ENCODE measurements at regions of chr3 and their contacts with region 1.

Region 1: DNA sequence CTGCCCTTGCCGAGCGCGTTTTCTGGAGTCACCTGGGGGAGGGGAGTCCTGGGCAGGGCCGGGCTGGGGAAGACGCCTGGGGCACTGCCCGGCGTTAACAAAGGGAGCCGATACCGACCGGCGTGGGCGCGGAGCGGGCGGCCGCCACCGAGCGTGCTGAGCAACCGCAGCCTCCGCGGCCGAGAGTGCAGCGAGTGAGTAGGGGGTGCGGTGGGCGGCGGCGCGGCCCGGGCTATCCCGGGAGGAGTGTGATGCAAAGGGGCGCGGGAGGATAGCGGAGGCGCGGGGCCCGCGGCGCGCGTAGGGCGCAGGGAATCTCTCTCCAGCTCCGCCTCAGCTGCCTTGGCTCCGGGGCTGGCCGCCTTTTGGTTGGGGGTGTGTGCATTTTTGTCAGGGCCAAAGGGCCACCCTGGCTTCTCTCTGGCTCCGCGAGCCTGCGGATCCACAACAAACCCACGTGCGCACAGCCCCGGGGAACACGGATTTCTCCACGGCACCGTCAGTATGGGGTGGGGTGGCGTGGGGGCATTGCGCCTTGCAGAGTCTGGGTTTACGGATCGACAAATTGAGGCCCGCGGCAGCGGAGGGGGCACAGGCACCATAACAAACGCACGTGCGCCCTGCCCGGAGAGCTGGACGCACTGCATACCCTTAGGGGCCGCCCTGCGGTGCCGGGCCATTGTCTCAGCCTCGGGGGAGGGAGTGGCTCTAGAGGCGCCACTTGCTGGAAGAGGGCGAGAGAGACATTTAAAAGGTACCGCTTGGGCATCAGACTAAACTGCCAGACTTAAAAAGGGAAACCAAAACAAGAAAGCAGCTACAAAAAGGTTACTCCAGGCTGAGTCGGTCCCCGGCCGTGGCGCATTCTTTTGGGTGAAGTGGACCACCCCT is 560 bp downstream of the ST6GAL1 start:
- DNase-seq: peak; percentile 54
- H3K4me3 Mint-ChIP-seq: peak overlapping the region; percentile 87
- H3K27ac Mint-ChIP-seq: peak overlapping the region; percentile 90
- H3K4me1 Mint-ChIP-seq: peaks cover 49% of the 10 kb centered on the region
- H3K27me3 Mint-ChIP-seq: no peaks in the 10 kb centered on the region

Region 2: DNA sequence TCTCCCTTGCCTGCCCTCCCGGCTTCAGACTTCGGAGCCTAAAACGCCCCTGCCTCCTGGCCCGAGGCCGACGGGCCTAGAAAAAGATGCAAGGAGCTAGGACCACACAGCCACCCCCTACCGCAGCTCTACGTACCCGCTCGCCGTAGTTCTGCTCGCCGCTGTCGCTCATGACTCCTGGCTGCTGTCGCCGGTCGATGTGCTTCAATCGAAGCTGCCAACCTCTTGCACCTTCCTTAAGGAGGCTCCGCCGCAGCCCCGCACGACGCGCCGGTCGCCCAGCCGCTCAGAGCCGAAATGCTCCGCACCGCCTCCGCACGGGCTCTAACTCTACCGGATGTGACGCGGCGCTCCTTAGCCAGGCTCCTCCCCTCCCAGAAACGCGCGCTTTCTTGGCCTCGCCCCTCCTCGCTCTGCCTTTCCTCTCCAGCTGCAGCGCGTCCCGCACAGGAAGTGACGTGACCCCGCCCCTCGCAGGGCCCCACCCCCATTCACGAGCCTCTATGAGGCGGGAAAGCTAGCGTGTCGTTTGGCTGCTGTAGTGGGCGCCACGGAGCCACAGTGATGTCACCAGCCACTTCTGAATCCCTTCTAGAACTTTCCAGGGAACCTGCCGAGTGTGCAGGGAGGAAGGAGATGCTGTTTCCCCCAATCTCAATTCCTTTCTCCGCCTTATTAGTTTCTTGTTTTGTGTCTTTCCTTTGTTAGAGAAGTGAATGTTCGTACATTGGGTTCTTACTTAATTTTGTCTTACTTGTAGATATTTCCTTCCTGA is 993.0 kb before region 1 on chr3 and contains the start of gene TRA2B:
- intact Hi-C with region 1: loop called (anchors 5 kb)
- DNase-seq: peak; percentile 98
- H3K4me3 Mint-ChIP-seq: peak within 1 kb of the TSS; percentile 97
- H3K27ac Mint-ChIP-seq: peak within 1 kb of the TSS; percentile 99
- H3K4me1 Mint-ChIP-seq: peaks cover 40% of the 10 kb centered on the region
- H3K27me3 Mint-ChIP-seq: peaks cover 8% of the 10 kb centered on the region
- total RNA-seq, gene TRA2B: 279 and 312 TPM in 2 replicates

Region 3: GRCh38 chr3:186162221-186162620 is 768.7 kb before region 1 on chr3:
- intact Hi-C with region 1: no loop called
- DNase-seq: no peak
- H3K4me3 Mint-ChIP-seq: no peak overlapping the region
- H3K27ac Mint-ChIP-seq: no peak overlapping the region
- H3K4me1 Mint-ChIP-seq: no peaks in the 10 kb centered on the region
- H3K27me3 Mint-ChIP-seq: peaks cover 47% of the 10 kb centered on the region

Region 4: DNA sequence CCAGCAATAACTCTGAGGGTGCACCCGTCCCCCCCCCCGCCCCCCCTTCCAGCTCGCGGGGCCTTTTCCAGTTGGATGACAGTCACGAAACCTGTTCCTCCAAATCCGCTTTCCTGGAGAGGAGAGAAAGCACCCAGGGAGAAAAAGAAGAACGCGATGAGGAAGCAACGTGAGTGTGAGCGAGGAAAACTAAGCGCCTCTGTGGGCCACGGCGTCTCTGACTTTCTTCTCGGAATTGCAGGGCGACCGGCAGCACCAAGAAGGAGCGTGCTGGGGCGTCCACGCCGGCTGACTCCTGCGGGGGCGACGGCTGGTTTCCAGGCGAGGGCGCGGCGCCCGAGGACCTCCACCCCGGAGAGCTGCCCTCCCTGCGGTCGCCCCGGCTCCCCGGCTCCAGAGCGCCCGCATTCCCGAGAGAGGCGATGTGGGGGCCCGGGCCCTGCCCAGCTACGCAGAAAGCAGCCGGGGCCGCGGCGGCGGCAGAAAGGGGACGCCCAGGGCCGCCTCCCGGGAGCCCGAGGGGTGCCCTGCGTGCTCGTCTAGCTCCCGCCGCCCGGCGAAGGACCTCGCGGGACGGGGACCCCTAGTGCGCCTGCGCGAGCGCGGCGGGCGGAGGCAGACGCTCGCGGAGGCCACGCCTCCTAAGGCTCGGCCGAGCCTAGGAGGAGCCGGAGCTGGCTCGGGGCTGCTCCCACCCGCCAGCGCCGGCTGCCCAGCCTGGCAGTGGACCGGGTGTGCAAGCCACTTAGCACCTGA is 103.7 kb before region 1 on chr3:
- intact Hi-C with region 1: loop called (anchors 1 kb)
- DNase-seq: peak; percentile 87
- H3K4me3 Mint-ChIP-seq: peak overlapping the region; percentile 93
- H3K27ac Mint-ChIP-seq: peak overlapping the region; percentile 78
- H3K4me1 Mint-ChIP-seq: peaks cover 20% of the 10 kb centered on the region
- H3K27me3 Mint-ChIP-seq: peaks cover 48% of the 10 kb centered on the region

Region 5: DNA sequence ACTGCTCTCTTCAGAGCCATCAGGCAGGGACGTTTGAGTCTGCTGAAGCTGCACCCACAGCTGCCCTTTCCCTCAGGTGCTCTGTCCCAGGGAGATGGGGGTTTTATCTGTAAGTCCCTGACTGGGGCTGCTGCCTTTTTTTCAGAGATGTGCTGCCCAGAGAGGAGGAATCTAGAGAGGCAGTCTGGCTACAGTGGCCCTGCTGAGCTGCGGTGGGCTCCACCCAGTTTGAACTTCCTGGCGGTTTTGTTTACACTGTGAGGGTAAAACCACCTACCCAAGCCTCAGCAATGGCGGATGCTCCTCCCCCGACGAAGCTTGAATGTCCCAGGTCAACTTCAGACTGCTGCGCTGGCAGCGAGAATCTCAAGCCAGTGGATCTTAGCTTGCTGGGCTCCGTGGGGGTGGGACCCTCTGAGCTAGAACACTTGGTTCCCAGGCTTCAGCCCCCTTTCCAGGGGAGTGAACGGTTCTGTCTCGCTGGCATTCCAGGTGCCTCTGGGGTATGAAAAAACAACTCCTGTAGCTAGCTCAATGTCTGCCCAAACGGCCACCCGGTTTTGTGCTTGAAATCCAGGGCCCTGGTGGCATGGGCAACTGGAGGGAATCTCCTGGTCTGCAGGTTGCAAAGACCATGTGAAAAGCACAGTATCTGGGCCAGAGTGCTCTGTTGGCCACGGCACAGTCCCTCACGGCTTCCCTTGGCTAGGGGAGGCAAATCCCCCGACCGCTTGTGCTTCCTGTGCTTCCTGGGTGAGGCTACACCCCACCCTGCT is 21.6 kb before region 1 on chr3:
- intact Hi-C with region 1: loop called (anchors 1 kb)
- DNase-seq: peak; percentile 76
- H3K4me3 Mint-ChIP-seq: peak overlapping the region; percentile 55
- H3K27ac Mint-ChIP-seq: peak overlapping the region; percentile 90
- H3K4me1 Mint-ChIP-seq: peaks cover 37% of the 10 kb centered on the region
- H3K27me3 Mint-ChIP-seq: no peaks in the 10 kb centered on the region

Region 6: GRCh38 chr3:187025656-187026316 is 94.9 kb after region 1 on chr3:
- intact Hi-C with region 1: loop called (anchors 1 kb)
- DNase-seq: no peak
- H3K4me3 Mint-ChIP-seq: peak overlapping the region; percentile 85
- H3K27ac Mint-ChIP-seq: peak overlapping the region; percentile 97
- H3K4me1 Mint-ChIP-seq: peaks cover 59% of the 10 kb centered on the region
- H3K27me3 Mint-ChIP-seq: no peaks in the 10 kb centered on the region

Region 7: DNA sequence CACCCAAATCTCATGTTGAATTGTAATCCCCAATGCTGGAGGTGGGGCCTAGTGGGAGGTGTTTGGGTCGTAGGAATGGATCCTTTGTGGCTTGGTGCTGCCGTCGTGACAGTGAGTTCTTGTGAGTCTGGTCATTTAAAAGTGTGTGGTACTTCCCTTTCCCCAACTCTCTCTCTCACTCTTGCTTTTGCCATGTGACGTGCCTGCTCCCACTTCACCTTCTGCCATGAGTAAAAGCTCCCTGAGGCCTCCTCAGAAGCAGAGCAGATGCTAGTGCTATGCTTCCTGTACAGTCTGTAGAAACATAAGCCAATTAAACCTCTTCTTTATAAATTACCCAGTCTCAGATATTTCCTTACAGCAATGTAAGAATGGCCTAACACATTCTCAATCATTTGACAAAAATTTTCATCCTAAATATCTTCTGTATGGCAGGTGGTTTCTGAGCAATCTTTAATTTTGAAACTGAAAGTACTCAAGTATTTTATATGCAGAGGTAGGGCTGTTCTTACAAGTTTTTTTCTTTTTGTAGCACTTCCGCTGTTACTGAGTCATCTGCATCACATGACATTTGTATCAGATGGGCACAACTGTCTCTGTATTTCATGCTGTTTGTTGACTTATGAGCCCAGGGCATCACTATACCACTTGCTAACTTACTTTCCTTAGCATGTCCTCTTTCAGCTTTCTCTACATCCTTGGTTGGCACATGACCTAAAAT is 199.6 kb after region 1 on chr3:
- intact Hi-C with region 1: loop called (anchors 2 kb)
- DNase-seq: peak; percentile 47
- H3K4me3 Mint-ChIP-seq: peak overlapping the region; percentile 51
- H3K27ac Mint-ChIP-seq: peak overlapping the region; percentile 91
- H3K4me1 Mint-ChIP-seq: peaks cover 58% of the 10 kb centered on the region
- H3K27me3 Mint-ChIP-seq: no peaks in the 10 kb centered on the region

Region 8: DNA sequence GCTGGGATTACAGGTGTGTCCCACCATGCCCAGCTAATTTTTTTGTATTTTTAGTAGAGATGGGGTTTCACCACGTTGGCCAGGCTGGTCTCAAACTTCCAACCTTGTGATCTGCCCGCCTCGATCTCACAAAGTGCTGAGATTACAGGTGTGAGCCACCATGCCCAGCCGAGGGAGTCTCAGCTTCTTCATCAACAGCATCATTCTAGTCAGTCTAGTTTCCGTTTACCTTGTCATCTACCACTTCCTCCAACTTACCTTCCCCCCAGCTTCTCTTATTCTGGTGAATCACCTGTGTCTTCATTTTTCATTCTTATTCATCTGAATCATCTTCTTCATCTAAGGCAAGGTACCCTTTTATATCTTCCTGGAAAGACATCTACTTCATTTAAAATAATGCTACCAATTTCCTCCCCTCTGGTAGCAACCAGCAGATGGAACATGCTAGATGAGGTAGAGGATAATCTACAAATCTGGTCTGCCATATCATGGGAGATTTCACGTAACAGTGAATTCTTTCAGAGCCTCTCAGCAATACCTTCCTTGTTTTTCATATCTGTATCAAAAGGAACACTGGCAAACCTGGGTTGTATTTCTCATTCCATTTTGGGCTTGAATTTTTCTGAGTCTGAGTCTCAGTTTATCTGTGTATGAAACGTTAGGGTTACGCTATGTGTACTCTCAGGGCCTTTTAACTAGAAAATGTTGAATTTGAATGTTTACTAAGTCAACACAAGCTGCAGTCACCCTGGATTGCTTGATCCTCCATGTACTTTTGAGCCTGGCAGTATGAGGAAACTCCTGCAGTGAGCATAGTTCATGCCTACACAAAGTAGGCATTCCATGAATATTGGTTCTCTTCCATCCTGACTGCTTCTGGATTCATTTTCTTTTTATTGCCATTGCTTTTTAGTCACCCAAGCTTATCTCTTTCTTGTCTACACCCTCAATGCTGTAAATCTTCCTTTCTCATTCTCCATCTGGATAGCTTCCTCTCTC is 1239.9 kb after region 1 on chr3:
- intact Hi-C with region 1: no loop called
- DNase-seq: no peak
- H3K4me3 Mint-ChIP-seq: peak overlapping the region; percentile 9
- H3K27ac Mint-ChIP-seq: peak overlapping the region; percentile 49
- H3K4me1 Mint-ChIP-seq: peaks cover 52% of the 10 kb centered on the region
- H3K27me3 Mint-ChIP-seq: no peaks in the 10 kb centered on the region